ENCODE measurements at regions of chr5 and their contacts with region 1.

Region 1: DNA sequence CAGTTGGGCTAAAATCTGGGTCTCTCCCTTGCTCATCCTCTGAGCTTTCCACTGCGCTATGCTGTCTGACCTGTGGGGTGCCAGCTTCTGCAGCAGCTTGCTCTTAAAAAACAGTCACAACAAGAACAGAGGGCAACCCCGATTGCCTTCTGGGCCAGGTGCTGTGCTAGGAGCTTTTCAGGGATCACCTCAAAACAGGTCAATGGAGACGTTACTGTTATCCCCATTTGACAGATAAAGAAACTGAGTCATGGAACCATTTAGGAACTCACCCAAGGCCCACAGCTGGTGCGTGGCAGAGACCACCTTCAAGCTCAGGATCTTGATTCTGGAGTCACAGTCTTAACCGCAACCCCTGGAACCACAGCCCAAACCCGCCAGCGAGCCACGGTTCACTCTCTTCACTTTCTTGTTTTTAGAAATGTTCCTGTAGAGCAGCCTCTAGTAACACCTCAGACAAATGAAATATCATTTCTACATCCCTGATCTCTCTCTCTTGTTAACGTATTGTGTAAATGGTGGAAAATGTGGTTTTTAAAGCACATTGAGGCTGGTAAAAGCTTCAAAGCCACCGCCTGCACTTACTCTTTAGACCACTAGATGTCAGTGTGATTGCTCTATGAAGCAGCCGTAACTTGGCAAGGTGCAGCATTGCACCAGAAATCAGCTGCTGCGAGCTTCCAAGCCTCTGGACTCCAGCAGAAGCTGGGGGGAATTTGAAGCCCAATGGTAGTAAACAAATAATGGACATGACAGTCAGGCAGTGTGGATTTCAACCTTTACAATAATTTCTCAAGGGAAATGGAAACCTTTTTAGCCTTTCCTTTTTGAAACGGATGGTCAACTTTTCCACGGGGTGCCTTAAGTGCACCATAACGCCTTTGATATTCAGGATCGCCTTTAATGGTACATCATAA is 1.7 kb downstream of the FYB1 start:
- DNase-seq: peak; percentile 91
- H3K4me3 Mint-ChIP-seq: peak overlapping the region; percentile 72
- H3K27ac Mint-ChIP-seq: peak overlapping the region; percentile 91
- H3K4me1 Mint-ChIP-seq: peaks cover 70% of the 10 kb centered on the region
- H3K27me3 Mint-ChIP-seq: no peaks in the 10 kb centered on the region

Region 2: DNA sequence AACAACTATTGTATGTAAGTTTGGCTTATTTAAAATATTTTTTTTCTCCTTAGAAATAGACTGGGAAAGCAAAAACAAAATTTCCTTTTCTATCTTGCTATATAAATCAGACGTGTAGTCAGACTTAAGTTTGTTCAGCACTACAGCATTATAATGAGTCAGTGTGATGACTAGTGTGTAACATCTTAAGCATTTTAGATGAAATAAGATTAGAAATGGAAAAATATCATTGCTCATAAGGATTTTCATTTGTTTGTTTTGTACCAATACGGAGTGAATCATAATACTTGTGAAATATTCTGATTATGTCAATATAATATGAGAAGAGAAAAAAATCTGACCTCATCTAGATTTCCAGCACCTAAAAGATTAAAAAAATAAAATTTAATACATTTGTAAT is 78.7 kb before region 1 on chr5:
- CTCF ChIA-PET with region 1: interaction called, 11 read pairs
- intact Hi-C with region 1: no loop called
- DNase-seq: no peak
- H3K4me3 Mint-ChIP-seq: no peak overlapping the region
- H3K27ac Mint-ChIP-seq: no peak overlapping the region
- H3K4me1 Mint-ChIP-seq: peaks cover 23% of the 10 kb centered on the region
- H3K27me3 Mint-ChIP-seq: no peaks in the 10 kb centered on the region

Region 3: DNA sequence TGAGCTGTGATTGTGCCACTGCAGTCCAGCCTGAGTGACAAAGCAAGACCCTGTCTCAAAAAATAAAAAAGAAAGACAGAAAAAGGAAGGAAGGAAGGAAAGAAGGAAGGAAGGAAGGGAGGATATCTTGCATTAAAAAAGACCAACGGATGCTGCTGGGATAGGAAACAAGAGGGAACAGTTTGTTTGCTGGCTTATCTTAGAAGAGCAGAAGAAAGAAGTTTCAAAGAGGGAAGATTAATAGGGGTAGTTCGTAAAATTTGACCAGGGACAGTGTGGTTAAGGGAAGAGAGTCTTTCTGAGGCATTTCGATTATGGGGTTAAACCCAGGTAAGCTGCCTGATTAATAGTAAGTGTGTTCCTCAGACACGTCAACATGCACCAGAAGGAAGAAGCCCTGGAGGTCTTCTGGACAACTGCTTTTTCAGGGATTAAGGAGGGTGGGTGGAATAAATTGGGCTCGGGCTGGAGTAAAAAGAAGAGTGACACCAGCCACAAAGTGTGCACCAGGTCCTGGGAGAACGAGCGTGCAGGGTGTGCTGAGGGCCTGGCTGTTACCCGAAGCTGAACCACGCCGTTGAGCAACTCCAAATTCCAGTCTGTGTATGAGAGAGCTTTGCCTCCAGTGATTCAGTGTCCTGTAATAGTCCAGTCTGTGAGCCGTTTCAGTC is 23.0 kb before region 1 on chr5:
- CTCF ChIA-PET with region 1: interaction called, 42 read pairs
- intact Hi-C with region 1: no loop called
- DNase-seq: no peak
- H3K4me3 Mint-ChIP-seq: peak overlapping the region; percentile 76
- H3K27ac Mint-ChIP-seq: peak overlapping the region; percentile 93
- H3K4me1 Mint-ChIP-seq: peaks cover 62% of the 10 kb centered on the region
- H3K27me3 Mint-ChIP-seq: no peaks in the 10 kb centered on the region

Region 4: DNA sequence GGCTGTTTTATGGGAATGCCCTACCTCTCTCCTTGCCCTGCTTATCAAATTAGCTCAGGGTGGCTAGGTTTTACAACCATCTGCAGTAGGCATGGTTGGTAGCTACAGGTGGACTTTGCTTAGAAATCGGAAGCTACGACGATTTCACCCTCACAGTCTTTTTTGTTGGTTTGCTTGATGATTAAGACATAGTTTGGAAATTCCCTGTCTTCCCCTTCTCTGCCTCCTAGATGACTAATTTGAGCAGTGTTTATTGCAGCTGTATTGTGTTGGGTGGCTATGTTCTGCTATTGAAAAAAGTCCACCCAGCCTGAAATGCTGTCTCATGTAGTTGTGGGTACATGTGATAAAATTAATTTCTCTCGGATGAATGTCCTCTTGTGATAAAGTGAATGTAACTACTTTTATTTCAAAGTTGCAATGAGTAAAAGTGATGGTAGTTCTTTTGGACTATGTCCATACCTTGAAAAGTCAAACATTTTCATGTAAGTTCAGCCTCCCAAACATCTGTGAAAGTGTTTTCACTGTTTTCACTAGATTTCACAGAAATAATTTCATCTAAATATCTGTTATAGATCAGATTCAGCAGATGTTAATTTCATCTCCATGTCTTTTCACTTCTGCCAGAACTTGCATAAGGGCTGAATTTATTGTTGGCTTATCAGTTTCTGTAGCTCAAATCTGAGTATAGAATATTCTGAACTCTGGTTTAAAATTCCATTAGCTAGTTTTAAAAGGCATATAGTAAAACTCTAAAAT is 39.0 kb after region 1 on chr5:
- CTCF ChIA-PET with region 1: interaction called, 11 read pairs
- intact Hi-C with region 1: no loop called
- DNase-seq: peak; percentile 20
- H3K4me3 Mint-ChIP-seq: no peak overlapping the region
- H3K27ac Mint-ChIP-seq: no peak overlapping the region
- H3K4me1 Mint-ChIP-seq: peaks cover 16% of the 10 kb centered on the region
- H3K27me3 Mint-ChIP-seq: no peaks in the 10 kb centered on the region

Region 5: GRCh38 chr5:39376293-39376714 is 158.7 kb after region 1 on chr5:
- CTCF ChIA-PET with region 1: interaction called, 15 read pairs
- intact Hi-C with region 1: loop called (anchors 2 kb)
- DNase-seq: peak; percentile 65
- H3K4me3 Mint-ChIP-seq: no peak overlapping the region
- H3K27ac Mint-ChIP-seq: no peak overlapping the region
- H3K4me1 Mint-ChIP-seq: no peaks in the 10 kb centered on the region
- H3K27me3 Mint-ChIP-seq: no peaks in the 10 kb centered on the region

Region 6: GRCh38 chr5:40223884-40224402 is 1006.3 kb after region 1 on chr5:
- CTCF ChIA-PET with region 1: no interaction called
- intact Hi-C with region 1: loop called (anchors 10 kb)
- DNase-seq: peak; percentile 66
- H3K4me3 Mint-ChIP-seq: peak overlapping the region; percentile 31
- H3K27ac Mint-ChIP-seq: peak overlapping the region; percentile 92
- H3K4me1 Mint-ChIP-seq: peaks cover 50% of the 10 kb centered on the region
- H3K27me3 Mint-ChIP-seq: no peaks in the 10 kb centered on the region